Ovary (tissue), 10 donors: ENCODE measurements at regions of chr16 and their contacts with region 1.

Region 1: GRCh38 chr16:29961479-29962343 is at the start of gene TMEM219:
- DNase-seq: peak; percentile 89 to 96 (median 91)
- H3K4me3 ChIP-seq: peak within 1 kb of the TSS; percentile 68
- H3K27ac ChIP-seq: peak within 1 kb of the TSS; percentile 75 to 84
- H3K4me1 ChIP-seq: peaks cover 3% of the 10 kb centered on the region
- H3K27me3 ChIP-seq: no peaks in the 10 kb centered on the region
- CTCF ChIP-seq: peak; percentile 28 to 94 (median 84)
- EP300 ChIP-seq: no peak
- POLR2A ChIP-seq: peak; percentile 59
- total RNA-seq, gene TMEM219: 81.3 to 143 (median 87.4) TPM

Region 2: GRCh38 chr16:29745853-29746345 is 215.8 kb before region 1 on chr16 and contains the start of gene C16orf54:
- intact Hi-C with region 1: no loop called
- DNase-seq: peak in 1 of 5 donors; percentile 19
- H3K4me3 ChIP-seq: no peak within 1 kb of the TSS
- H3K27ac ChIP-seq: no peak within 1 kb of the TSS
- H3K4me1 ChIP-seq: no peaks in the 10 kb centered on the region
- H3K27me3 ChIP-seq: no peaks in the 10 kb centered on the region
- CTCF ChIP-seq: no peak
- EP300 ChIP-seq: no peak
- POLR2A ChIP-seq: no peak
- total RNA-seq, gene C16orf54: 0.12 to 0.72 (median 0.30) TPM

Region 3: GRCh38 chr16:29926005-29926710 is 35.6 kb before region 1 on chr16 and contains the start of gene KCTD13:
- intact Hi-C with region 1: loop called in 1 of 4 experiments (anchors 2 kb)
- DNase-seq: peak; percentile 86 to 96 (median 90)
- H3K4me3 ChIP-seq: peak within 1 kb of the TSS; percentile 73
- H3K27ac ChIP-seq: peak within 1 kb of the TSS; percentile 54 to 82
- H3K4me1 ChIP-seq: peaks cover 13% of the 10 kb centered on the region
- H3K27me3 ChIP-seq: no peaks in the 10 kb centered on the region
- CTCF ChIP-seq: no peak
- EP300 ChIP-seq: no peak
- POLR2A ChIP-seq: peak; percentile 89
- total RNA-seq, gene KCTD13: 18.4 to 36.8 (median 25.5) TPM